CD8-positive, alpha-beta T cell (primary cell): ENCODE measurements at regions of chr3 and their contacts with region 1.

Region 1: GRCh38 chr3:197256836-197257444 is 41.5 kb downstream of the DLG1 start:
- DNase-seq: peak in 5 of 9 experiments; percentile 9 to 71 (median 35)
- ATAC-seq: no peak
- H3K4me3 ChIP-seq: no peak overlapping the region
- H3K4me3 Mint-ChIP-seq: no peak overlapping the region
- H3K27ac ChIP-seq: no peak overlapping the region
- H3K27ac Mint-ChIP-seq: no peak overlapping the region
- H3K4me1 ChIP-seq: peaks cover 19% of the 10 kb centered on the region
- H3K4me1 Mint-ChIP-seq: peaks cover 66% of the 10 kb centered on the region
- H3K27me3 ChIP-seq: no peaks in the 10 kb centered on the region
- H3K27me3 Mint-ChIP-seq: no peaks in the 10 kb centered on the region
- CTCF ChIP-seq: peak; percentile 88

Region 2: GRCh38 chr3:197244751-197245150 is 12.2 kb before region 1 on chr3:
- CTCF ChIA-PET with region 1: interaction called, 29 read pairs
- POLR2A ChIA-PET with region 1: no interaction called
- intact Hi-C with region 1: no loop called
- DNase-seq: no peak
- ATAC-seq: no peak
- H3K4me3 ChIP-seq: no peak overlapping the region
- H3K4me3 Mint-ChIP-seq: no peak overlapping the region
- H3K27ac ChIP-seq: no peak overlapping the region
- H3K27ac Mint-ChIP-seq: no peak overlapping the region
- H3K4me1 ChIP-seq: no peaks in the 10 kb centered on the region
- H3K4me1 Mint-ChIP-seq: peaks cover 19% of the 10 kb centered on the region
- H3K27me3 ChIP-seq: no peaks in the 10 kb centered on the region
- H3K27me3 Mint-ChIP-seq: no peaks in the 10 kb centered on the region
- CTCF ChIP-seq: no peak

Region 3: GRCh38 chr3:197298341-197298857 is 41.5 kb after region 1 on chr3 and contains the start of gene DLG1:
- CTCF ChIA-PET with region 1: no interaction called
- POLR2A ChIA-PET with region 1: interaction called, 4 read pairs
- intact Hi-C with region 1: loop called in 1 of 2 experiments (anchors 5 kb)
- DNase-seq: peak; percentile 52 to 88 (median 77)
- ATAC-seq: peak; percentile 62
- H3K4me3 ChIP-seq: peak within 1 kb of the TSS; percentile 95 to 97
- H3K4me3 Mint-ChIP-seq: peak within 1 kb of the TSS; percentile 91
- H3K27ac ChIP-seq: peak within 1 kb of the TSS; percentile 62 to 76
- H3K27ac Mint-ChIP-seq: peak within 1 kb of the TSS; percentile 94
- H3K4me1 ChIP-seq: peaks cover 16% of the 10 kb centered on the region
- H3K4me1 Mint-ChIP-seq: peaks cover 43% of the 10 kb centered on the region
- H3K27me3 ChIP-seq: no peaks in the 10 kb centered on the region
- H3K27me3 Mint-ChIP-seq: peaks cover 2% of the 10 kb centered on the region
- CTCF ChIP-seq: no peak
- total RNA-seq, gene DLG1: 70.9 to 72.9 TPM

Region 4: GRCh38 chr3:197456261-197457091 is 199.5 kb after region 1 on chr3:
- CTCF ChIA-PET with region 1: interaction called, 23 read pairs
- POLR2A ChIA-PET with region 1: interaction called, 3 read pairs
- intact Hi-C with region 1: loop called (anchors 1 kb)
- DNase-seq: peak in 8 of 9 experiments; percentile 22 to 70 (median 36)
- ATAC-seq: peak; percentile 35
- H3K4me3 ChIP-seq: peak overlapping the region; percentile 72 to 83
- H3K4me3 Mint-ChIP-seq: peak overlapping the region; percentile 95
- H3K27ac ChIP-seq: peak overlapping the region in 1 of 2 experiments; percentile 43
- H3K27ac Mint-ChIP-seq: peak overlapping the region; percentile 87
- H3K4me1 ChIP-seq: peaks cover 9% of the 10 kb centered on the region
- H3K4me1 Mint-ChIP-seq: peaks cover 29% of the 10 kb centered on the region
- H3K27me3 ChIP-seq: peaks cover 0 to 3% of the 10 kb centered on the region in 2 experiments
- H3K27me3 Mint-ChIP-seq: peaks cover 3% of the 10 kb centered on the region
- CTCF ChIP-seq: no peak

Region 5: GRCh38 chr3:197511130-197511529 is 254.2 kb after region 1 on chr3:
- CTCF ChIA-PET with region 1: interaction called, 75 read pairs
- POLR2A ChIA-PET with region 1: interaction called, 3 read pairs
- intact Hi-C with region 1: loop called (anchors 1 kb)
- DNase-seq: no peak
- ATAC-seq: no peak
- H3K4me3 ChIP-seq: no peak overlapping the region
- H3K4me3 Mint-ChIP-seq: no peak overlapping the region
- H3K27ac ChIP-seq: no peak overlapping the region
- H3K27ac Mint-ChIP-seq: no peak overlapping the region
- H3K4me1 ChIP-seq: peaks cover 3% of the 10 kb centered on the region
- H3K4me1 Mint-ChIP-seq: peaks cover 4% of the 10 kb centered on the region
- H3K27me3 ChIP-seq: peaks cover 0 to 2% of the 10 kb centered on the region in 2 experiments
- H3K27me3 Mint-ChIP-seq: no peaks in the 10 kb centered on the region
- CTCF ChIP-seq: no peak